ENCODE measurements at regions of chr4 and their contacts with region 1.

Region 1: GRCh38 chr4:86593688-86594558 is at the start of gene PTPN13:
- DNase-seq: peak; percentile 98
- ATAC-seq: peak; percentile 95
- H3K4me3 ChIP-seq: peak within 1 kb of the TSS; percentile 74
- H3K27ac ChIP-seq: peak within 1 kb of the TSS; percentile 89
- H3K4me1 ChIP-seq: peaks cover 2% of the 10 kb centered on the region
- H3K27me3 ChIP-seq: no peaks in the 10 kb centered on the region
- CTCF ChIP-seq: 0 out of 2 replicates have a peak, but pooled peaks have one; percentile 8
- POLR2A ChIP-seq: peak; percentile 86
- RAD21 ChIP-seq: no peak
- total RNA-seq, gene PTPN13: 29.0 and 31.4 TPM in 2 replicates

Region 2: DNA sequence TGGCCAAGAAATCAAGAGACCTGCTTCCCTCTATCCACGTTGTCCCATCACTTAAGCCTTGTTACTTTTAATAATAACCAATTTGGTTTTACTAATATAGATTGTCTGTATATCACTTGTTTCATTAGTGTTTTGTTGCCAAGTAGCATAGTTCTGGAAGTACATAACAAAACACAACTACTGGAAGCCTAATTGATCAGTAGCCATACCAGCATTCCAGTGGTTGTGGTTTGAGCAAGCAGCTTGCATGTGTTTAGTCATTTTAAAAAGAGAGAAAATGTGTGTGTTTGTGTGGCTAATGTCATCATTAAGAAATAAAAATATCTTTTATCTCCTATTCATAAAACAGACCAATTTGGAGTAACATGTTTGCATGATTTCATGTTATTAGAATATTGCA is 71.0 kb after region 1 on chr4:
- CTCF ChIA-PET with region 1: no interaction called
- POLR2A ChIA-PET with region 1: no interaction called
- dilution Hi-C with region 1: no loop called
- in situ Hi-C with region 1: no loop called
- intact Hi-C with region 1: loop called (anchors 10 kb)
- DNase-seq: peak; percentile 77
- ATAC-seq: peak; percentile 65; the same call in 1 of the 2 replicates
- H3K4me3 ChIP-seq: no peak overlapping the region
- H3K27ac ChIP-seq: no peak overlapping the region
- H3K4me1 ChIP-seq: no peaks in the 10 kb centered on the region
- H3K27me3 ChIP-seq: no peaks in the 10 kb centered on the region
- CTCF ChIP-seq: no peak
- POLR2A ChIP-seq: no peak
- RAD21 ChIP-seq: no peak

Measured in IMR-90 (cell line).